Dorsolateral prefrontal cortex (tissue), 120 donors: ENCODE measurements at regions of chr6 and their contacts with region 1.

Region 1: DNA sequence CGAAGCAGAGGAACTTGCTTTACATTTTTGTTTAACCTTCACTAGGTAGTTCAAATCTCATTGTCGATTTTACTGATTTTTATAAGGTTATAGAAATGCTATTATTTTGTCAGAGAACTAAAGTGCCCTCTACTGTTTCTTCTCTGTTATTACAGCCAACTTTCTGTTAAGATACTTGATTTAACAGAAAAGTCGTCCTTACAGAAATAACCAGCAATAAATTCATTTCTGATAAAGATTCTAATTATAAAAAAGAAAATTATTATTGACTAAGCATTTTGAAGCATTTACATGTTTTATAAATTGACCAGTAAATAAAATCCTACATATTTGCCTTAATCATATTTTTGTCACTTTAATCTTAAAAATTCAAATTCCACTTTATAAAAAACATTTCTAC is 60.8 kb downstream of the OGFRL1 start:
- DNase-seq: no peak
- H3K4me3 ChIP-seq: no peak overlapping the region
- H3K27ac ChIP-seq: peak overlapping the region in 5 of 59 donors; percentile 1 to 80 (median 45)
- H3K27me3 ChIP-seq: no peaks in the 10 kb centered on the region
- CTCF ChIP-seq: peak; percentile 54 to 89 (median 76)

Region 2: DNA sequence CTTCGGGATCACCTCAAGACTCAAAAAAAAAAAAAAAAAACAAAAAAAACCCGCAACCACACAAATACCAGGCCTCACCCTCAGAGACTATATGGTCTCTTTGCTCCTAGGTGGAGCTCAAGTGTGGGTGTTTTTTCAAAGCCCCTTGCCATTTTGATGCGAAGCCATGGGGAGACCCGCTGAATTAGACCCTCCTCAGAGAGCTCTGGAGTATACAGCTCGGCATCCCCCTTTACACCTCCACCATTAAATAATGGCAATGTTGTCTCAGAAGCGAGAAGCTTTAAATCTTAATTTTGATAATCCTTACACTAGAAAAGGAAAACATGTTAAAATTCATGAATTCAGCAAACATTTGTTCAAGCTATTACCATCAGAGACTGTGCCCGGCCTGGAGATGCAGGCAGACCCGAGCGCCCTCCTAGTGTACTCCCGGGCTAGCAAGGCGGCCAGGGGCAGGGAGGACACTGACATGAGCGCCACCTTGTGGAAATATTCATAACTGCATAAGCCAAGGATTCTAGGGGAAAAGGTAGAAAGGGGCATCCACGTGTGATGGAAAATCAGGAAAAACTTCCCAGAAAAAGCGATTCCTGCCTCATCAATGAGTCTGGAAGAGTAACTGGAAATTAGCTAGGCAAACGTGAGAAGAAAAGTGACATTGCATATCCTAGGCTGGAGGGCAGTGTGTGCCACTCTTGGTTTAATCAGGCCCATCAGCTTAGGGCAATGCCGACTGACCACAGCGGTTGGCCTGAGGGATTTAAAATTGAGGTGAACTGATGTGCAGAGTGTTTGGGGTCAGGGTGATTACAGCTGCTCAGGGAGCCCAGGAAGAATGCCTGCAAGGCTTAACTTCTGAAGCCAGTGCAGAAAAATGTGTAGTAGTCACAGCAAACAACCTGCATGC is 465.1 kb before region 1 on chr6:
- intact Hi-C with region 1: no loop called
- DNase-seq: peak in 9 of 10 donors; percentile 24 to 68 (median 49)
- H3K4me3 ChIP-seq: no peak overlapping the region
- H3K27ac ChIP-seq: no peak overlapping the region
- H3K27me3 ChIP-seq: peaks cover 0 to 3% (median 0%) of the 10 kb centered on the region in 45 donors
- CTCF ChIP-seq: peak; percentile 78 to 97 (median 93)

Region 3: DNA sequence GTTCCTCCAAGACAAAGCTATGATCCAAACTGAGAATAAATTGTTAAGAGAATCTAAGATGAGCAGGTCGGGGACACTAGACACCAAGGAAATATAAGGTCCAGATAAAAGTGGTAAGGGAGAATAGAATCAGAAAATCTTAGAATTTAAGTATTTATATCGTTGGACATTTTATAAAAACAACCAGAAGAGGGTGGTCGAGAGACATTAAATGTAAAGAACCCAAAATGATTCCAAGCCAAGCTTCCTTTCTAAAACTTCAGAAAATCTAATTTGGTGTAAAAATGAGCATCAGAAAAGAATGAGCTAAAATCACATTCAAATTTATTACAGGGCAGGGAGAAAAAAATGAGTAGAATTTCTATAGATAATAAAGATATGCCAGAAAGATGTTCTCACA is 158.6 kb before region 1 on chr6:
- intact Hi-C with region 1: loop called (anchors 2 to 10 kb)
- DNase-seq: no peak
- H3K4me3 ChIP-seq: no peak overlapping the region
- H3K27ac ChIP-seq: no peak overlapping the region
- H3K27me3 ChIP-seq: no peaks in the 10 kb centered on the region
- CTCF ChIP-seq: peak in 53 of 56 donors; percentile 17 to 73 (median 46)

Region 4: DNA sequence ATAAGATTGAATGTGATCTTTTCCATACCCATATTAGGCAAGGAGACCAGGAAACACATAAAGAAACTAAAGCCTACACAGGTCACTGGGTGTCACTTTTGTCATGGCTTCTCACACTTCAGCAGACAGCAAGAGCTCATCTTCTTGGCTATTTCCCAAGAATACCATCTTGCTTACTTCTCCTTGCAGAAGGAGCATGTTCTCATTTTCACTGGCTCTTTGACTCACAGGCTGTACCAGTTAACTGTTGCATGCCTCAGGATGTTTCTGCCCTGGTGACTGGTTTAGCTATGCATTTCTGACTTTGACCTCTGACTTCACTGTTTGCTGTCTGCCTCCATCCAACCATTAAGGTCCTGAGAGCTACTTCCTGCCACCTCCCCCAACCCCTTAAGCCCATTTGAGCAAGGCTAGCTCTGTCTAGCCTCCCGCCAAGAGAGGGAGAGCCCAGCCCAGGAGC is 101.1 kb before region 1 on chr6:
- intact Hi-C with region 1: loop called in 1 of 2 experiments (anchors 10 kb)
- DNase-seq: no peak
- H3K4me3 ChIP-seq: no peak overlapping the region
- H3K27ac ChIP-seq: peak overlapping the region in 5 of 59 donors; percentile 5 to 71 (median 19)
- H3K27me3 ChIP-seq: no peaks in the 10 kb centered on the region
- CTCF ChIP-seq: no peak

Region 5: GRCh38 chr6:71294121-71294523 is 55.3 kb before region 1 on chr6:
- intact Hi-C with region 1: loop called in 1 of 2 experiments (anchors 5 kb)
- DNase-seq: peak in 1 of 10 donors; percentile 75
- H3K4me3 ChIP-seq: peak overlapping the region in 3 of 59 donors; percentile 18 to 88 (median 87)
- H3K27ac ChIP-seq: peak overlapping the region in 17 of 59 donors; percentile 5 to 97 (median 35)
- H3K27me3 ChIP-seq: no peaks in the 10 kb centered on the region
- CTCF ChIP-seq: no peak

Region 6: GRCh38 chr6:71523548-71523947 is 174.2 kb after region 1 on chr6:
- intact Hi-C with region 1: no loop called
- DNase-seq: no peak
- H3K4me3 ChIP-seq: no peak overlapping the region
- H3K27ac ChIP-seq: no peak overlapping the region
- H3K27me3 ChIP-seq: no peaks in the 10 kb centered on the region
- CTCF ChIP-seq: no peak